Psoas muscle (tissue), 8 donors: ENCODE measurements at regions of chr2 and their contacts with region 1.

Region 1: GRCh38 chr2:219402665-219403515 is 15.2 kb upstream of the DNPEP start:
- DNase-seq: peak; percentile 65 to 81
- ATAC-seq: peak in 3 of 4 donors; percentile 14 to 30 (median 16)
- H3K4me3 ChIP-seq: no peak overlapping the region
- H3K27ac ChIP-seq: peak overlapping the region; percentile 98
- H3K4me1 ChIP-seq: peaks cover 81% of the 10 kb centered on the region
- H3K27me3 ChIP-seq: no peaks in the 10 kb centered on the region
- CTCF ChIP-seq: peak; percentile 93

Region 2: DNA sequence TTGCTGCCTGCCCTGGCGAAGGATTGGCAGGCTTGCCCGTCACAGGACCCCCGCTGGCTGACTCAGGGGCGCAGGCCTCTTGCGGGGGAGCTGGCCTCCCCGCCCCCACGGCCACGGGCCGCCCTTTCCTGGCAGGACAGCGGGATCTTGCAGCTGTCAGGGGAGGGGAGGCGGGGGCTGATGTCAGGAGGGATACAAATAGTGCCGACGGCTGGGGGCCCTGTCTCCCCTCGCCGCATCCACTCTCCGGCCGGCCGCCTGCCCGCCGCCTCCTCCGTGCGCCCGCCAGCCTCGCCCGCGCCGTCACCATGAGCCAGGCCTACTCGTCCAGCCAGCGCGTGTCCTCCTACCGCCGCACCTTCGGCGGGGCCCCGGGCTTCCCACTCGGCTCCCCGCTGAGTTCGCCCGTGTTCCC is 15.3 kb after region 1 on chr2 and contains the start of gene DES:
- intact Hi-C with region 1: loop called in 1 of 2 experiments (anchors 2 kb)
- DNase-seq: peak; percentile 84 to 95
- ATAC-seq: peak; percentile 74 to 76 (median 75)
- H3K4me3 ChIP-seq: peak within 1 kb of the TSS; percentile 93
- H3K27ac ChIP-seq: peak within 1 kb of the TSS; percentile 99
- H3K4me1 ChIP-seq: peaks cover 31% of the 10 kb centered on the region
- H3K27me3 ChIP-seq: no peaks in the 10 kb centered on the region
- CTCF ChIP-seq: no peak
- total RNA-seq, gene DES: 12,653 to 14,820 (median 13,821) TPM

Region 3: GRCh38 chr2:219433666-219434467 is 31.0 kb after region 1 on chr2:
- intact Hi-C with region 1: loop called (anchors 2 kb)
- DNase-seq: peak; percentile 65 to 83
- ATAC-seq: peak; percentile 28 to 46 (median 43)
- H3K4me3 ChIP-seq: peak overlapping the region; percentile 70
- H3K27ac ChIP-seq: peak overlapping the region; percentile 92
- H3K4me1 ChIP-seq: peaks cover 46% of the 10 kb centered on the region
- H3K27me3 ChIP-seq: no peaks in the 10 kb centered on the region
- CTCF ChIP-seq: peak; percentile 41

Region 4: GRCh38 chr2:219452838-219453317 is 50.0 kb after region 1 on chr2:
- intact Hi-C with region 1: loop called in 1 of 2 experiments (anchors 5 kb)
- DNase-seq: peak; percentile 83 to 90
- ATAC-seq: peak; percentile 77 to 81 (median 80)
- H3K4me3 ChIP-seq: peak overlapping the region; percentile 40
- H3K27ac ChIP-seq: peak overlapping the region; percentile 94
- H3K4me1 ChIP-seq: peaks cover 55% of the 10 kb centered on the region
- H3K27me3 ChIP-seq: no peaks in the 10 kb centered on the region
- CTCF ChIP-seq: no peak

Region 5: GRCh38 chr2:219530048-219530963 is 127.4 kb after region 1 on chr2:
- intact Hi-C with region 1: loop called (anchors 1 to 5 kb)
- DNase-seq: peak; percentile 81 to 95
- ATAC-seq: peak; percentile 91 to 97 (median 92)
- H3K4me3 ChIP-seq: peak overlapping the region; percentile 35
- H3K27ac ChIP-seq: no peak overlapping the region
- H3K4me1 ChIP-seq: no peaks in the 10 kb centered on the region
- H3K27me3 ChIP-seq: peaks cover 0 to 12% (median 0%) of the 10 kb centered on the region in 3 donors
- CTCF ChIP-seq: peak; percentile 97